GM12878 (cell line): ENCODE measurements at regions of chr2 and their contacts with region 1.

Region 1: DNA sequence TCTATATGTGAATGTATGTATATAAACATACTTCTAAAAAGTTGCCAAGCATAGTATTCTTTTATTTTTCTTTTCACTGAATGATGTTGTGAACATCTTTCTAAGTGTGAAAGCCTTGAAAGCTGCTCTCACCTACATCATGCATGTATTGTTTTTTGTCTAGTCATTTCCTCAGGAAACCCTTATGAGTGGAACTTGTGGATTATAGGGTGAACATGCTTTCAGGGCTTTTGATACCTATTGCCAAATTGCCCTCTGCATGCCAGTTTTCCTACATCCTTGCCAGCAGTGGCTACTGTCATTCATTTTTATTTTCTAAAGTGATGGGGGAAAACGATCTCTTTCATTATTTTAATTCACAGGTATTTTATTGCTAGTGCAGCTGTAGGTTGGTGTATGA is 78.3 kb downstream of the ADAM23 start:
- DNase-seq: no peak
- ATAC-seq: peak; percentile 43
- H3K4me3 ChIP-seq: no peak overlapping the region
- H3K27ac ChIP-seq: no peak overlapping the region
- H3K4me1 ChIP-seq: no peaks in the 10 kb centered on the region
- H3K27me3 ChIP-seq: no peaks in the 10 kb centered on the region
- CTCF ChIP-seq: no peak
- EP300 ChIP-seq: no peak
- POLR2A ChIP-seq: no peak
- RAD21 ChIP-seq: no peak

Region 2: DNA sequence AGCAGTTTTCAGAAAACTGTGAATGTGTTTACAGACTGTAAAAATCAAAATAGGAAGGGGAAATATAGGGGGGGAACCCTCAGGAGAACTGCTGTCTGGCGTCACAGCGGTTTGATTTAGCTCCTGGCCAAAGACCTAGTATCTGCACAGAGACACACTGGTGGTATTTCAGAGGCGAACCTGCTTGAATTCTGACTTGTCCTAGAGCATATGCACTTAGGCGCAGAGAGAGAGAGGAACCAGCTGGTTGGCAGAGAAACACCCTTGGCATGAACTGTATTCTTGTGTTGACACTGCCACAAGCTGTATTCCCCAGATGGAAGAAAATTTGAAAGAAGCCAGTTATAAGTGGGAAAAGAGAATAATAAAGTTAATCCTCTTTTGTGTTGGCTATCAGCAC is 1345.8 kb before region 1 on chr2:
- CTCF ChIA-PET with region 1: no interaction called
- POLR2A ChIA-PET with region 1: no interaction called
- RAD21 ChIA-PET with region 1: no interaction called
- SMC1A ChIA-PET with region 1: no interaction called
- in situ Hi-C with region 1: no loop called
- intact Hi-C with region 1: no loop called
- DNase-seq: no peak
- ATAC-seq: no peak
- H3K4me3 ChIP-seq: no peak overlapping the region
- H3K27ac ChIP-seq: no peak overlapping the region
- H3K4me1 ChIP-seq: no peaks in the 10 kb centered on the region
- H3K27me3 ChIP-seq: no peaks in the 10 kb centered on the region
- CTCF ChIP-seq: no peak
- EP300 ChIP-seq: no peak
- POLR2A ChIP-seq: no peak
- RAD21 ChIP-seq: no peak

Region 3: GRCh38 chr2:206531996-206532543 is 10.5 kb after region 1 on chr2:
- CTCF ChIA-PET with region 1: no interaction called
- POLR2A ChIA-PET with region 1: interaction called, 3 read pairs
- RAD21 ChIA-PET with region 1: no interaction called
- SMC1A ChIA-PET with region 1: interaction called, 14 read pairs
- in situ Hi-C with region 1: no loop called
- intact Hi-C with region 1: no loop called
- DNase-seq: no peak
- ATAC-seq: no peak
- H3K4me3 ChIP-seq: no peak overlapping the region
- H3K27ac ChIP-seq: no peak overlapping the region
- H3K4me1 ChIP-seq: no peaks in the 10 kb centered on the region
- H3K27me3 ChIP-seq: no peaks in the 10 kb centered on the region
- CTCF ChIP-seq: no peak
- EP300 ChIP-seq: no peak
- POLR2A ChIP-seq: no peak
- RAD21 ChIP-seq: no peak